Psoas muscle (tissue), 8 donors: ENCODE measurements at regions of chr6 and their contacts with region 1.

Region 1: GRCh38 chr6:151813858-151814257 is 6.4 kb downstream of the ESR1 start:
- DNase-seq: no peak
- ATAC-seq: peak in 2 of 4 donors; percentile 35 to 38
- H3K4me3 ChIP-seq: peak overlapping the region; percentile 45
- H3K27ac ChIP-seq: peak overlapping the region; percentile 26
- H3K4me1 ChIP-seq: peaks cover 30% of the 10 kb centered on the region
- H3K27me3 ChIP-seq: no peaks in the 10 kb centered on the region
- CTCF ChIP-seq: no peak

Region 2: GRCh38 chr6:151826517-151827142 is 12.8 kb after region 1 on chr6:
- intact Hi-C with region 1: no loop called
- DNase-seq: no peak
- ATAC-seq: no peak
- H3K4me3 ChIP-seq: no peak overlapping the region
- H3K27ac ChIP-seq: no peak overlapping the region
- H3K4me1 ChIP-seq: peaks cover 2% of the 10 kb centered on the region
- H3K27me3 ChIP-seq: no peaks in the 10 kb centered on the region
- CTCF ChIP-seq: no peak

Region 3: DNA sequence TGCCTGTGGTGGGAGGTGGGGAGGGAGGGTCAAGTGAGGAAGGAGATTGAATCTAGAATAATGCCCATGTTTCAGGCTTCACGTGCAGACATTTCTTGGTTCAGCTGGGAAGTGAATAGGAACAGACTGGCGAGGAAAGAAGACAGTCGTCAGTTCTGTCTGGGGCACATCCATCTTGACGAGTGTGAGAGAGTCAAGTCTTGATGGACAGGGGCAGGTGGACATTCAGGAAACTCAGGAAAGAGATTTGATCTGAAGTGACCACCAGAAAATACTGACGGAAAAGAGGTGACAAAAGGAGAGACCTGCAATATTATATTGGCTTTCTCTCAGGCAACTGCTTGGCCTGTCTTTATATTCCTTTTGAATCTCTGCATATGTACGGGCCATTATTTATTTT is 62.3 kb after region 1 on chr6:
- intact Hi-C with region 1: loop called in 1 of 2 experiments (anchors 5 kb)
- DNase-seq: no peak
- ATAC-seq: peak; percentile 79 to 90 (median 85)
- H3K4me3 ChIP-seq: peak overlapping the region; percentile 38
- H3K27ac ChIP-seq: peak overlapping the region; percentile 84
- H3K4me1 ChIP-seq: peaks cover 14% of the 10 kb centered on the region
- H3K27me3 ChIP-seq: no peaks in the 10 kb centered on the region
- CTCF ChIP-seq: no peak

Region 4: GRCh38 chr6:152267967-152268845 is 454.3 kb after region 1 on chr6:
- intact Hi-C with region 1: loop called in 1 of 2 experiments (anchors 5 kb)
- DNase-seq: no peak
- ATAC-seq: peak in 3 of 4 donors; percentile 24 to 42 (median 34)
- H3K4me3 ChIP-seq: peak overlapping the region; percentile 40
- H3K27ac ChIP-seq: peak overlapping the region; percentile 46
- H3K4me1 ChIP-seq: peaks cover 65% of the 10 kb centered on the region
- H3K27me3 ChIP-seq: no peaks in the 10 kb centered on the region
- CTCF ChIP-seq: peak; percentile 68